ENCODE measurements at regions of chr1 and their contacts with region 1.

Region 1: GRCh38 chr1:205977402-205978014 is 25.7 kb downstream of the RAB7B start:
- DNase-seq: peak; percentile 80
- CTCF ChIP-seq: peak; percentile 95

Region 2: GRCh38 chr1:205711104-205712020 is 266.1 kb before region 1 on chr1:
- CTCF ChIA-PET with region 1: interaction called, 17 read pairs
- POLR2A ChIA-PET with region 1: no interaction called
- DNase-seq: peak; percentile 58
- CTCF ChIP-seq: peak; percentile 83

Region 3: DNA sequence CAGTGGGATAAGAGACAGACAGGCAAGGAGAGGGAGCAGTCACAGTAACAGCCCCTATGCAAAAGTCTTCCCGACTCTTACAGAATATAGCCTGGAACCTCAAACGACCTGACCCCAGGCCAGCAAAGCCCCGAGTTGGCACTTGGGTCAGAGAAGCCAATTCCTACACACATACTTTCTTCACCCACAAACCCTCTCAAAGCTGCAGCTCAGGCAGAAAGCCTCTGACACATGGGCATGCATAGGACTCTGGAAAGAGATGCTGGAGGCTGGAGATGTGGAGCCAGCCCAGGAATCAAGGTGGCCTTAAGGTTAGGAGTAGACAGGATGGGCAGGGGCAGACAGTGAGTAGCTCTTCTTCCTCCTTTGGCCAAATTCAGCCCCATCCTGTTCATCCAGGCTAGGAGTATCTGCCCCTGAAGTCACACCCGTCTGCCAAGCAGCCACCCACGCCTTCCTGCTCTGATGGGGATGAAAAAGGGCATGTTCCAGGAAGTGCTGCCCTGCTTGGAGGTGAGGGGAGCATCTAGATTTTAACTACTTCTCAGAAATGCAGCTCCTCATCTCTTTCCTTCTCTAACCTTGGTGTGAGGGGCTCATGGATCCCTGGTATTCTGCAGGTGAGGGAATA is 172.3 kb before region 1 on chr1:
- CTCF ChIA-PET with region 1: interaction called, 10 read pairs
- POLR2A ChIA-PET with region 1: no interaction called
- DNase-seq: no peak
- CTCF ChIP-seq: no peak

Region 4: GRCh38 chr1:205950280-205950679 is 27.2 kb before region 1 on chr1:
- CTCF ChIA-PET with region 1: interaction called, 25 read pairs
- POLR2A ChIA-PET with region 1: no interaction called
- DNase-seq: no peak
- CTCF ChIP-seq: no peak

Region 5: GRCh38 chr1:206001476-206001888 is 24.0 kb after region 1 on chr1:
- CTCF ChIA-PET with region 1: interaction called, 41 read pairs
- POLR2A ChIA-PET with region 1: no interaction called
- DNase-seq: no peak
- CTCF ChIP-seq: no peak